Natural killer cell (primary cell): ENCODE measurements at regions of chr3 and their contacts with region 1.

Region 1: GRCh38 chr3:126982471-126983175 is at the start of gene PLXNA1:
- DNase-seq: peak; percentile 91 to 95
- ATAC-seq: peak; percentile 84 to 93 (median 84)
- H3K4me3 ChIP-seq: peak within 1 kb of the TSS; percentile 49
- H3K4me3 Mint-ChIP-seq: peak within 1 kb of the TSS; percentile 83
- H3K27ac ChIP-seq: peak within 1 kb of the TSS; percentile 98
- H3K27ac Mint-ChIP-seq: peak within 1 kb of the TSS; percentile 83 to 91
- H3K4me1 ChIP-seq: peaks cover 22% of the 10 kb centered on the region
- H3K4me1 Mint-ChIP-seq: peaks cover 0 to 13% of the 10 kb centered on the region in 2 donors
- H3K27me3 ChIP-seq: peaks cover 3% of the 10 kb centered on the region
- H3K27me3 Mint-ChIP-seq: peaks cover 23 to 28% of the 10 kb centered on the region in 2 donors
- CTCF ChIP-seq: peak; percentile 93
- total RNA-seq, gene PLXNA1: 2.5 to 4.3 (median 2.8) TPM

Region 2: DNA sequence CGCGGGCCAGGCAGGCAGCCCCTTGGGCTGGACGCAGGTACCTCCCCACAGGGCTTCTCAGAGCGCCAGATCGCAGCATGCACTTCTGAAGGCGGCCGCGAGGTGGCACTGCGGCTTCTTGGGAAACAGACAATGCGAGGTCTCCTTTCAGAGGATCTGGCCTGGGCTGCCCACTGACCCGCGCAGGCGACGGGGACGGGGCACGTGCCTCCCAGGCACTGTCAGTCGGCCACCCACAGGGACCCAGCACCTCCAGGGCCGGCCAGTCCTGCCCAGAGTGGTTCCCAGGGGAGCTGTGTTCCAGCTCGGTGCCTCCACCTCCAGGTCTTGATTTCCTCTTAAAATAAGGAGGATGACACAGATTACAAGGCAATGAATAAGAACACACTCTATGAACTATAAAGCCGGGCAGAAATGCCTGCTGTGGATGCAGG is 303.3 kb before region 1 on chr3:
- intact Hi-C with region 1: loop called (anchors 5 kb)
- DNase-seq: peak; percentile 76 to 81
- ATAC-seq: peak; percentile 77 to 95 (median 95)
- H3K4me3 ChIP-seq: no peak overlapping the region
- H3K4me3 Mint-ChIP-seq: no peak overlapping the region
- H3K27ac ChIP-seq: no peak overlapping the region
- H3K27ac Mint-ChIP-seq: no peak overlapping the region
- H3K4me1 ChIP-seq: peaks cover 10% of the 10 kb centered on the region
- H3K4me1 Mint-ChIP-seq: peaks cover 7% of the 10 kb centered on the region in 2 donors
- H3K27me3 ChIP-seq: peaks cover 11% of the 10 kb centered on the region
- H3K27me3 Mint-ChIP-seq: peaks cover 22 to 50% of the 10 kb centered on the region in 2 donors
- CTCF ChIP-seq: peak; percentile 99

Region 3: GRCh38 chr3:126703512-126704462 is 278.8 kb before region 1 on chr3 and contains the start of gene CHCHD6:
- intact Hi-C with region 1: loop called (anchors 10 kb)
- DNase-seq: peak; percentile 91 to 98
- ATAC-seq: peak; percentile 91 to 94 (median 94)
- H3K4me3 ChIP-seq: peak within 1 kb of the TSS; percentile 53
- H3K4me3 Mint-ChIP-seq: peak within 1 kb of the TSS; percentile 96
- H3K27ac ChIP-seq: no peak within 1 kb of the TSS
- H3K27ac Mint-ChIP-seq: peak within 1 kb of the TSS; percentile 61 to 89
- H3K4me1 ChIP-seq: peaks cover 14% of the 10 kb centered on the region
- H3K4me1 Mint-ChIP-seq: peaks cover 17 to 23% of the 10 kb centered on the region in 2 donors
- H3K27me3 ChIP-seq: peaks cover 6% of the 10 kb centered on the region
- H3K27me3 Mint-ChIP-seq: peaks cover 37 to 43% of the 10 kb centered on the region in 2 donors
- CTCF ChIP-seq: no peak
- total RNA-seq, gene CHCHD6: 5.3 to 9.9 (median 8.3) TPM

Region 4: GRCh38 chr3:126850370-126851085 is 132.1 kb before region 1 on chr3:
- intact Hi-C with region 1: no loop called
- DNase-seq: no peak
- ATAC-seq: no peak
- H3K4me3 ChIP-seq: no peak overlapping the region
- H3K4me3 Mint-ChIP-seq: no peak overlapping the region
- H3K27ac ChIP-seq: no peak overlapping the region
- H3K27ac Mint-ChIP-seq: no peak overlapping the region
- H3K4me1 ChIP-seq: no peaks in the 10 kb centered on the region
- H3K4me1 Mint-ChIP-seq: no peaks in the 10 kb centered on the region
- H3K27me3 ChIP-seq: no peaks in the 10 kb centered on the region
- H3K27me3 Mint-ChIP-seq: peaks cover 0 to 2% of the 10 kb centered on the region in 2 donors
- CTCF ChIP-seq: no peak

Region 5: DNA sequence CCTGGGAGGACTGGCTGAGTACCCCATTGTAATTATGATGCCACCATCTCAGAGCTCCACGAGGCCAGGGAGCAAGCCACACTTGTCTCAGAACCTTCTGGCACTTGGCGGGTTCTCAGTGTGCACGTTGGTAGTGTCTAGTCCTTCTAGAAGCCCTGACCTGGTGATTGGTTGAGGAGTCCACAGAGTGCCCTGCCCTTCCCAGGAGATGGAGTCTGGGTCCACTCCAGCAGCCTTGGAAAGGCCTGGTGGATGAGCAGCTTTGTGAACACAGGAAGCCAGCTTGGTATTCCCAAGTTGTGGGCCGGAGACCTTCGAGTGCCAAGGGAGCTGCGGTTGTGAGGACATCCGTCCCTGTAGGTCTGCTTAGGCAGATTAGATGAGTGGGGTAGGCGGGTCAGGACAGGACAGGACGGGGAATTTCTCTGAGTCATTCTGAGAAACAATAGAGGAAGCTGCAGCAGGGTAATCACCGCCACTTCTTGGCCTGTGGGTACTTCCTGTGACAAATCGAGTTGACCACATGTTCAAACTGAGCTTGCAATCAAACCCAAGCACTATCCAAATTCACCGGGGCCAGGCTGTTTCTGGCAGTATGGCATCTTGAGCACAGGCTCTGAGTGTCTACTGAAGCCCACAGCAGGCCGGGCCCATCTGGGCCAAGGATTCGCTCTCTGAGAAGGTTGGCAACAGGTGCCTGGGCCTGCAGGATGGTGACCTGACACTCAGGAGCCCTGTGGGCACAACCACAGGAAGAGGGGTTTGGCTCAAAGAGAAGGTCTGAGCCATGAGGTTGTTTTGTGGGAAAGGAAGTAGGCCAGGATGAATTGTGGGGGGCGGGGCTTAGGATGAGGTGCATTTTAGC is 71.2 kb before region 1 on chr3:
- intact Hi-C with region 1: loop called (anchors 1 kb)
- DNase-seq: peak; percentile 75 to 84
- ATAC-seq: peak; percentile 89 to 95 (median 94)
- H3K4me3 ChIP-seq: no peak overlapping the region
- H3K4me3 Mint-ChIP-seq: peak overlapping the region; percentile 88
- H3K27ac ChIP-seq: peak overlapping the region; percentile 34
- H3K27ac Mint-ChIP-seq: peak overlapping the region; percentile 89 to 95
- H3K4me1 ChIP-seq: peaks cover 63% of the 10 kb centered on the region
- H3K4me1 Mint-ChIP-seq: peaks cover 48 to 49% of the 10 kb centered on the region in 2 donors
- H3K27me3 ChIP-seq: peaks cover 39% of the 10 kb centered on the region
- H3K27me3 Mint-ChIP-seq: peaks cover 33 to 40% of the 10 kb centered on the region in 2 donors
- CTCF ChIP-seq: no peak